ENCODE measurements at regions of chr5 and their contacts with region 1.

Region 1: DNA sequence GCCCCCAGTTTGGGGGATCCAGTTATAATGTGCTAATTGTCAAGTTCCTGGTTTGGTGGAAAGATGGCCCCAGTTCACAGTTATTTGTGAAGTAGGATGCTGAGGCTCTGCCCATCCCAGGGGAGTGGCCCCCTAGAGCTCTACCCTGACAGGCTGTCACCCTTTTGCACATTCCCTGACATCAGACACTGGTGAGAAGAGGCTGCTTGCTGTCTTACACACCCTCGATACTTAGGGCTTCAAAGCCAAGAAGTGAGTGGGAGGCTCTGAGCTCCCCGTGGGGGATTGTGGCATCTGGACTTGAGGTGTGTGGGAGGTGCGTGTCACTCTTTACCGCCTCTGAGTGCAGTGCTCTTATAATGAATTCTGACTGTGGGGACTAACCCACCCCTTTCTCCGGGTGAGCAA is 168.5 kb downstream of the DOCK2 start:
- DNase-seq: peak; percentile 94
- ATAC-seq: peak; percentile 90
- H3K4me3 ChIP-seq: peak overlapping the region; percentile 26; the same call in 1 of the 2 replicates
- H3K27ac ChIP-seq: peak overlapping the region; percentile 84
- H3K4me1 ChIP-seq: peaks cover 46% of the 10 kb centered on the region
- H3K27me3 ChIP-seq: no peaks in the 10 kb centered on the region
- CTCF ChIP-seq: no peak
- EP300 ChIP-seq: peak; percentile 87 to 90
- POLR2A ChIP-seq: peak; percentile 72
- RAD21 ChIP-seq: peak; percentile 29; the same call in 1 of the 2 replicates

Region 2: GRCh38 chr5:169656125-169656901 is 149.2 kb before region 1 on chr5:
- CTCF ChIA-PET with region 1: interaction called, 6 read pairs
- POLR2A ChIA-PET with region 1: interaction called, 8 read pairs
- RAD21 ChIA-PET with region 1: interaction called, 9 read pairs
- SMC1A ChIA-PET with region 1: interaction called, 11 read pairs
- in situ Hi-C with region 1: no loop called
- intact Hi-C with region 1: no loop called
- DNase-seq: peak; percentile 79
- ATAC-seq: peak; percentile 75
- H3K4me3 ChIP-seq: peak overlapping the region; percentile 40; the same call in 1 of the 2 replicates
- H3K27ac ChIP-seq: peak overlapping the region; percentile 88
- H3K4me1 ChIP-seq: peaks cover 60% of the 10 kb centered on the region
- H3K27me3 ChIP-seq: no peaks in the 10 kb centered on the region
- CTCF ChIP-seq: no peak
- EP300 ChIP-seq: peak; percentile 56 to 70; a peak in 3 of 4 replicates
- POLR2A ChIP-seq: no peak
- RAD21 ChIP-seq: peak; percentile 21; the same call in 1 of the 2 replicates

Region 3: GRCh38 chr5:169706758-169707691 is 98.5 kb before region 1 on chr5:
- CTCF ChIA-PET with region 1: interaction called, 31 read pairs
- POLR2A ChIA-PET with region 1: interaction called, 6 read pairs
- RAD21 ChIA-PET with region 1: interaction called, 78 read pairs
- SMC1A ChIA-PET with region 1: interaction called, 104 read pairs
- in situ Hi-C with region 1: no loop called
- intact Hi-C with region 1: loop called (anchors 1 kb)
- DNase-seq: no peak
- ATAC-seq: no peak
- H3K4me3 ChIP-seq: no peak overlapping the region
- H3K27ac ChIP-seq: peak overlapping the region; percentile 60
- H3K4me1 ChIP-seq: peaks cover 45% of the 10 kb centered on the region
- H3K27me3 ChIP-seq: no peaks in the 10 kb centered on the region
- CTCF ChIP-seq: no peak
- EP300 ChIP-seq: no peak
- POLR2A ChIP-seq: no peak
- RAD21 ChIP-seq: no peak

Region 4: GRCh38 chr5:169748174-169748573 is 57.4 kb before region 1 on chr5:
- CTCF ChIA-PET with region 1: interaction called, 5 read pairs
- POLR2A ChIA-PET with region 1: interaction called, 5 read pairs
- RAD21 ChIA-PET with region 1: interaction called, 42 read pairs
- SMC1A ChIA-PET with region 1: interaction called, 46 read pairs
- in situ Hi-C with region 1: no loop called
- intact Hi-C with region 1: loop called (anchors 1 kb)
- DNase-seq: no peak
- ATAC-seq: peak; percentile 40
- H3K4me3 ChIP-seq: no peak overlapping the region
- H3K27ac ChIP-seq: no peak overlapping the region
- H3K4me1 ChIP-seq: peaks cover 9% of the 10 kb centered on the region
- H3K27me3 ChIP-seq: no peaks in the 10 kb centered on the region
- CTCF ChIP-seq: no peak
- EP300 ChIP-seq: no peak
- POLR2A ChIP-seq: no peak
- RAD21 ChIP-seq: no peak

Region 5: DNA sequence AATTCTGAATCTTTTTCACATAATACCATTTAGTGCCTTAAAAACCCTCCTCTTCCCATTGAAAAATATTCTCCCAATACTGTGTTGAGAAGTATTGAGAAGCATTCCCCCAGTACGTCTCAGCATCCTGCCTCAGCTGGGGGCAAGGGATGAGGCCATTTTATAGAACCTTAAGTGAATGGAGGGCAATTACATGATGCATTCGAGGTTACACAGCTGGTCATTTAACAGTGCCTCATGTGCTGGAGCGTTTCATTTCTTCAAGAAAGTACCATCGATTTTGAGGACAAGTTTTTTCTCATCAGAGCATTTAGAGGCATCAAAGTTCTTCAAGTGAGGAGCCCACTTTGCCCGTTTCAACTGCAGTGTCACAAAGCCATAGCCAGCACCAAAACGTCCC is 32.8 kb before region 1 on chr5:
- CTCF ChIA-PET with region 1: interaction called, 10 read pairs
- POLR2A ChIA-PET with region 1: interaction called, 5 read pairs
- RAD21 ChIA-PET with region 1: interaction called, 130 read pairs
- SMC1A ChIA-PET with region 1: interaction called, 368 read pairs
- in situ Hi-C with region 1: no loop called
- intact Hi-C with region 1: loop called (anchors 5 kb)
- DNase-seq: no peak
- ATAC-seq: no peak
- H3K4me3 ChIP-seq: no peak overlapping the region
- H3K27ac ChIP-seq: no peak overlapping the region
- H3K4me1 ChIP-seq: peaks cover 8% of the 10 kb centered on the region
- H3K27me3 ChIP-seq: no peaks in the 10 kb centered on the region
- CTCF ChIP-seq: no peak
- EP300 ChIP-seq: no peak
- POLR2A ChIP-seq: no peak
- RAD21 ChIP-seq: no peak

Region 6: GRCh38 chr5:169826618-169827017 is 21.1 kb after region 1 on chr5:
- CTCF ChIA-PET with region 1: interaction called, 5 read pairs
- POLR2A ChIA-PET with region 1: interaction called, 9 read pairs
- RAD21 ChIA-PET with region 1: interaction called, 18 read pairs
- SMC1A ChIA-PET with region 1: interaction called, 54 read pairs
- in situ Hi-C with region 1: no loop called
- intact Hi-C with region 1: no loop called
- DNase-seq: no peak
- ATAC-seq: peak; percentile 60
- H3K4me3 ChIP-seq: no peak overlapping the region
- H3K27ac ChIP-seq: no peak overlapping the region
- H3K4me1 ChIP-seq: no peaks in the 10 kb centered on the region; the same call in 1 of the 2 replicates
- H3K27me3 ChIP-seq: no peaks in the 10 kb centered on the region
- CTCF ChIP-seq: peak; percentile 7 to 13 (median 12); a peak in 1 of 6 replicates
- EP300 ChIP-seq: no peak
- POLR2A ChIP-seq: no peak
- RAD21 ChIP-seq: peak; percentile 34; the same call in 1 of the 2 replicates

Region 7: DNA sequence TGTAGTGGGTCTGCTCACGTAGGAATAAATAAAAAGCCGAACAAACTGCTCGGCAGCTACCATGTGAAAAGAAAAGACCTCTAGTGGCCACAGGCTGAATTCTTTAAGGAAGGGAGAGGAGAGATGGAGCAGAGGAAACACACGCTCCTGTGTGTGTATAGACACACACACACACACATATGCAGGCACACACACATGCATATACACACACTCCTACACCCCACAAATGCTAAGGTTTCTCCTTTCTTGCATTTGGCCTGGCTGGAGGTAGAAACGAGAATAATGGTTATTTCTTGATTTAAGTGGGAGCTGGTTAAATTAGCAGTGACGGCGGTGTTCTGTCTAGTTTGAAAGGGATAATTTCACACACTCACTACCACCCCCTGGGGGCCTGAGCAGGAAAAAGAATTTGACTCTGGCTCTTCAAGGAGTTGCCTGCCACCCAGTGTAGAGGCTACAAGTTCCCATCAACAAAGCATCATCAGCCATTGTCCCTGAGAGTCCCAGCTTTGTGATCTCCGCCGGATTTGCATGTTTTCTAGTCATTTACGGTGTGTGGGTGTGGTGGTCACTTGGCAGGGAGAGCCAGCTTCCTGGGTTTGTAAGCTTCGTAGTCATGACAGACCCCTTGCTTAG is 175.0 kb after region 1 on chr5 and contains the start of gene INSYN2B:
- CTCF ChIA-PET with region 1: interaction called, 21 read pairs
- POLR2A ChIA-PET with region 1: no interaction called
- RAD21 ChIA-PET with region 1: interaction called, 21 read pairs
- SMC1A ChIA-PET with region 1: interaction called, 28 read pairs
- in situ Hi-C with region 1: no loop called
- intact Hi-C with region 1: no loop called
- DNase-seq: no peak
- ATAC-seq: peak; percentile 90
- H3K4me3 ChIP-seq: no peak within 1 kb of the TSS
- H3K27ac ChIP-seq: no peak within 1 kb of the TSS
- H3K4me1 ChIP-seq: peaks cover 4% of the 10 kb centered on the region; the same call in 1 of the 2 replicates
- H3K27me3 ChIP-seq: no peaks in the 10 kb centered on the region
- CTCF ChIP-seq: peak in 2 of 3 experiments; percentile 33 to 71; a peak in 3 of 6 replicates
- EP300 ChIP-seq: no peak
- POLR2A ChIP-seq: no peak
- RAD21 ChIP-seq: peak; percentile 67
- polyA plus RNA-seq, gene INSYN2B: 0.05 TPM in 1 of 2 experiments, not detected in the other